ENCODE measurements at regions of chr20 and their contacts with region 1.

Region 1: DNA sequence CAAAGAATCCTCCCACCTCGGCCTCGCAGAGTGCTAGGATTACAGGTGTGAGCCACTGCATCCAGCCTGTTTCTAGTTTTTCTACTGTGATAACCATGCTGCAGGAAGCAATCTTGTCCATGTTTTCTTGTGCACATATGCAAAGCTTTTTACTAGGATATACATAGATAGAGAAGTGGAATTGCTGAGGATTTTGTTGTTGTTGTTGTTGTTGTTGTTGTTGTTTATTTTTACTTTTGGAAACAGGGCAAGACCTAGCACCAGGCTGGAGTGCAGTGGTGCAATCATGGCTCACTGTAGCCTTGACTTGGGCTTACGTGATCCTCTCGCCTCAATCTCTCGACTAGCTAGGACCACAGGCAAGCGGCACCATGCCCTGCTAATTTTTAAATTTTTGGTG is 23.2 kb downstream of the KIF3B start:
- DNase-seq: no peak
- ATAC-seq: no peak
- H3K4me3 ChIP-seq: no peak overlapping the region
- H3K4me3 Mint-ChIP-seq: no peak overlapping the region
- H3K27ac ChIP-seq: no peak overlapping the region
- H3K27ac Mint-ChIP-seq: no peak overlapping the region
- H3K4me1 ChIP-seq: peaks cover 0 to 2% of the 10 kb centered on the region in 2 experiments
- H3K4me1 Mint-ChIP-seq: peaks cover 18 to 32% (median 23%) of the 10 kb centered on the region in 3 donors
- H3K27me3 ChIP-seq: no peaks in the 10 kb centered on the region
- H3K27me3 Mint-ChIP-seq: no peaks in the 10 kb centered on the region

Region 2: DNA sequence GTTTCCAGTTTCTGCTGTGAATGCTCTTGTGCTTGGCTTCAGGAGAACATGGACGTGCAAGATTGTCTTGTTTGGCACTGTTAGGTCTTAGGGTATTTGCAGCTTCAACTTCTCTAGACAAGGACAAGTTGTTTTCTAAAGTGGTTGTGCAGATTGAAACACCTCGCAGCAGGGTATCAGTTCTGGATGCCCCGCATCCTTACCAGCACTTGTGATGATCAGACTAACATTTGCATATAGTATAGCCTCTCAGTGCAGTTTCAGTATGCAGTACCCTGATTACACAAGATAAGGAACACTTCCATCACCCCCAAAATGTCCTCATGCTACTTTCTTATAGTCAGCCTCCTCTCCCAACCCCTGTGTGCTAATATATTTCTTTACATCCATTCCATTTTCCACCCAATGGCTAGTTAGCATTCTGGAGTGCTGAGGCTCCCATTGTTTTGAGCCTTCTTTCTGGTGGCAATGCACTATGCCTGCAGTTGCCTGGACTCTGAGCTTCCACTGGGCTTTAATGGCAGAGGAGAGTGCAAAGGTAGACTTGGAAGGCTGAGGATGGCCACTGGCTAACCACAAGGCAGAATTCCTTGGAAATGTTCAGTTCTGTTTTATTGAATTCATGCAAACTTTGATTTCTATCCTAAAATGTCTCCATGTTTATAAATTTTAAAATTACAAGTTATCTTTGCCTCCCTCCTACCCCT is 12.2 kb after region 1 on chr20:
- CTCF ChIA-PET with region 1: no interaction called
- POLR2A ChIA-PET with region 1: interaction called in 1 of 2 experiments, 10 read pairs
- DNase-seq: no peak
- ATAC-seq: no peak
- H3K4me3 ChIP-seq: no peak overlapping the region
- H3K4me3 Mint-ChIP-seq: no peak overlapping the region
- H3K27ac ChIP-seq: no peak overlapping the region
- H3K27ac Mint-ChIP-seq: no peak overlapping the region
- H3K4me1 ChIP-seq: no peaks in the 10 kb centered on the region
- H3K4me1 Mint-ChIP-seq: peaks cover 0 to 6% (median 1%) of the 10 kb centered on the region in 3 donors
- H3K27me3 ChIP-seq: no peaks in the 10 kb centered on the region
- H3K27me3 Mint-ChIP-seq: no peaks in the 10 kb centered on the region

Measured in T-cell (primary cell).